Vagina (tissue), 2 donors: ENCODE measurements at regions of chr1 and their contacts with region 1.

Region 1: GRCh38 chr1:37859507-37860345 is at the start of gene MTF1:
- DNase-seq: peak; percentile 98 to 99
- H3K4me3 ChIP-seq: peak within 1 kb of the TSS; percentile 82 to 95
- H3K27ac ChIP-seq: peak within 1 kb of the TSS; percentile 89
- H3K4me1 ChIP-seq: peaks cover 40% of the 10 kb centered on the region
- H3K27me3 ChIP-seq: no peaks in the 10 kb centered on the region
- CTCF ChIP-seq: peak; percentile 64 to 86 (median 77)
- POLR2A ChIP-seq: peak in 1 of 2 donors; percentile 58
- total RNA-seq, gene MTF1: 9.3 TPM

Region 2: GRCh38 chr1:37807555-37808368 is 52.0 kb before region 1 on chr1 and contains the starts of genes C1orf122 and YRDC:
- intact Hi-C with region 1: loop called (anchors 10 kb)
- DNase-seq: no peak
- H3K4me3 ChIP-seq: peak within 1 kb of the TSS; percentile 92 to 93
- H3K27ac ChIP-seq: peak within 1 kb of the TSS; percentile 82
- H3K4me1 ChIP-seq: peaks cover 31% of the 10 kb centered on the region
- H3K27me3 ChIP-seq: no peaks in the 10 kb centered on the region
- CTCF ChIP-seq: no peak
- POLR2A ChIP-seq: peak in 1 of 2 donors; percentile 69
- total RNA-seq, gene C1orf122: 51.8 TPM
- total RNA-seq, gene YRDC: 9.1 TPM

Region 3: DNA sequence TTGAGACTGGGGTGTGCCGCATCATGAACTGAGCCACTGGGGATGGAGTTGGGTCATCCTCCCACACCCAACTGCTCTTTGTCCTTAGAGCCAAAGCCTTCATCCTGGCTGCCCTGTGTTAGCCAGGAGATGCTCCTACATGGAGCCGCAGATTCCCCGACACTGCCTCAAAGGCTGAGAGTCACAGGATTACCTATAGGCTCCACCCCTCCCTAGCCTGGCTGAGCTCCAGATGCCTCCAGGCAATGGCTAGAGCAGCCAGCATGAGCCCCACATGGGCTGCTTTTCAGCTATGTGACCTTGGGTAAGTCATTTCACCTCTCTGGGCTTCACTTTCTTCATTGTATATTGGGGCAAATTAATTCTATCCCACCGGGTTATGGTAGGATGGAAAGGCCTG is 306.7 kb after region 1 on chr1:
- intact Hi-C with region 1: no loop called
- DNase-seq: no peak
- H3K4me3 ChIP-seq: no peak overlapping the region
- H3K27ac ChIP-seq: no peak overlapping the region
- H3K4me1 ChIP-seq: no peaks in the 10 kb centered on the region
- H3K27me3 ChIP-seq: no peaks in the 10 kb centered on the region
- CTCF ChIP-seq: no peak
- POLR2A ChIP-seq: no peak